Activated naive CD4-positive, alpha-beta T cell treated with anti-CD3 and anti-CD28 coated beads for 36 hours (primary cell): ENCODE measurements at regions of chr9 and their contacts with region 1.

Region 1: DNA sequence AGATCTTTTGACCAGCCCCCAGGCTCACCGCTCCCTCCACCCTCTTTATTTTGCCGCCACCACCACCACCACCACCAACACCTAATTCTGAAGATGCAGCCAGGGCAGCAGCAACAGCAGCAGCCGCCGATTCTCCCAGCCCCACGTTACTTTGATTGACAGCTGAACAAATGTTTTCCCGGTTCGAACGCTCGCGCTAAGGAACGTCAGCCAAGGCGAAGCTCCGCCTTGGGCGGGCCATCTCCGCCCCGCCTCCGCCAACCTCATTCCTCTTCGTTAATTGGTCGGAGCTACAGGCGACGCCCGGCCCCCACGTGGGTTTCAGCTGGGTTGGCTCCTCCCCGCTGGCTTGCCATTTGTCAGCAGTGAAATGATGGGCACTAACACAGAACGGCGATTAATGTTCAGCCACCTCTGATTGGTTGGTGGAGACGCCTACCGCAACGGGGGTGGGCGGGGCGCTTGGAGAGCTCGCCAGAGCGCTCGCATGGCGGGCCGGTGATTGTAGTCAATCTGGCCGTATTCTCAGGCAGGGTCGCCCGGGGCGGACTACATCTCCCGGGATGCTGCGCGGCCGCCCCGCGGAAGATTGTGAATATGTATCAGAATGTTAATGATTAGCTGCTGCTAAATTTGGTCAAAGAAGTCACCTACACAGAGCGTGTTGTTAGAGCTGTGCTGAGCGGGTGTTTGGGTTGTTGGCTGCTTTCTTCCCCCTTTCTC is at the start of gene TLE4:
- DNase-seq: peak; percentile 99
- H3K4me3 Mint-ChIP-seq: peak within 1 kb of the TSS; percentile 80
- H3K27ac Mint-ChIP-seq: peak within 1 kb of the TSS; percentile 46
- H3K4me1 Mint-ChIP-seq: peaks cover 26% of the 10 kb centered on the region
- H3K27me3 Mint-ChIP-seq: peaks cover 6% of the 10 kb centered on the region
- total RNA-seq, gene TLE4: 11.2 to 13.1 TPM

Region 2: DNA sequence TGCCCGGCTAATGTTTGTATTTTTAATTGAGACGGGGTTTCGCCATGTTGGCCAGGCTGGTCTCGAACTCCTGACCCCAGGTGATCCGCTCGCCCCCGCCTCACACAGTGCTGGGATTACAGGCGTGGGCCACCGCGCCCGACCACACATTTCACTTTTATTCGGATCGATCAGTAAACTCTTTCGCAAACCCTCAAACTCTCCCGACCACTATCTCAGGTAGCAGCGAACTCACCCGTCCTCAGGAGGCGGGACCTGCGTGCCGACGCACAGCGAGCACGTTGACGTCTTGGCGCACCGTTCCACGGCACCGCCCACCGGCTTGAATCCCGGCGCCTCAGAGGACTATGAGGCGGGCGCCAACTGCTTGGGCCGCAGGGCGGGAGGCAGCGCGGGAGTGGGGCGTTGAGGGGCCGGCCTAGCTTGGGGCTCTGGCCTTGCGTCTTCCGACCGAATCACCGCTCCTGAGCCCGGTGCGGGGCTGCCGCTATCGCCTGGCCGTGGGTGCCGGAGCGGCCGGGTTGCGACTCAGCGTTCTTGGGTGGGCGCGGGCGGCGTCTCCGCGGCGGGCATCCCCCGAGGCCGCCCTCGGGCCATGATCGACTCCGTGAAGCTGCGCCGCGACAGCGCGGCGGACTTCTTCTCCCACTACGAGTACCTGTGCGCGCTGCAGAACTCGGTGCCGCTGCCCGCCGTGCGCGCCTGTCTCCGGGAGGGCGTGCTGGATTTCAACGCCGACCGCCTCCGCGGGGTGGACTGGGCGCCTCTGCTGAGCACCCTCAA is 1335.5 kb before region 1 on chr9 and contains the start of gene CEP78:
- CTCF ChIA-PET with region 1: no interaction called
- intact Hi-C with region 1: loop called (anchors 10 kb)
- DNase-seq: peak; percentile 91
- H3K4me3 Mint-ChIP-seq: peak within 1 kb of the TSS; percentile 96
- H3K27ac Mint-ChIP-seq: peak within 1 kb of the TSS; percentile 91
- H3K4me1 Mint-ChIP-seq: peaks cover 34% of the 10 kb centered on the region
- H3K27me3 Mint-ChIP-seq: no peaks in the 10 kb centered on the region
- total RNA-seq, gene CEP78: 39.5 to 39.7 TPM

Region 3: DNA sequence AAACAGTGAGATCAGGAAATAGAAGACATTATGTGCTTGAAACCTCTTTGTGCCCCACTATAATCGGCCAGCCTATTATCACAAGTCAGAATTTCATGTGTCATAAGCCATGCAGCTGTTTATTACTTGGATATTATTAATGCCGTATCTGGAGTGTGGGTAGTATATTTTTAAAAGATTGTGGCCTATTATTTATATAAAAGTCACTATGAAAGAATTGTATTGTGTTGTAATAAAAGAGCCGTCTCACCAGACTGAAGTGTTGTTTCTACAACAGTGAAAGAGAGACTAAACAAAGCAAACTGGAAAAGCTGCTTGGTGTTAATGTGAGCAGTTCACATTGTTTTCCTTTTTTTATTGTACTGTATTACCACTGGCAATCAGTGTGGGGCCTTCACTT is 825.5 kb before region 1 on chr9:
- CTCF ChIA-PET with region 1: no interaction called
- intact Hi-C with region 1: no loop called
- DNase-seq: no peak
- H3K4me3 Mint-ChIP-seq: no peak overlapping the region
- H3K27ac Mint-ChIP-seq: no peak overlapping the region
- H3K4me1 Mint-ChIP-seq: no peaks in the 10 kb centered on the region
- H3K27me3 Mint-ChIP-seq: no peaks in the 10 kb centered on the region

Region 4: GRCh38 chr9:79471580-79472543 is 99.6 kb before region 1 on chr9:
- CTCF ChIA-PET with region 1: interaction called, 5 read pairs
- intact Hi-C with region 1: loop called (anchors 2 kb)
- DNase-seq: peak; percentile 42
- H3K4me3 Mint-ChIP-seq: no peak overlapping the region
- H3K27ac Mint-ChIP-seq: no peak overlapping the region
- H3K4me1 Mint-ChIP-seq: peaks cover 20% of the 10 kb centered on the region
- H3K27me3 Mint-ChIP-seq: no peaks in the 10 kb centered on the region

Region 5: DNA sequence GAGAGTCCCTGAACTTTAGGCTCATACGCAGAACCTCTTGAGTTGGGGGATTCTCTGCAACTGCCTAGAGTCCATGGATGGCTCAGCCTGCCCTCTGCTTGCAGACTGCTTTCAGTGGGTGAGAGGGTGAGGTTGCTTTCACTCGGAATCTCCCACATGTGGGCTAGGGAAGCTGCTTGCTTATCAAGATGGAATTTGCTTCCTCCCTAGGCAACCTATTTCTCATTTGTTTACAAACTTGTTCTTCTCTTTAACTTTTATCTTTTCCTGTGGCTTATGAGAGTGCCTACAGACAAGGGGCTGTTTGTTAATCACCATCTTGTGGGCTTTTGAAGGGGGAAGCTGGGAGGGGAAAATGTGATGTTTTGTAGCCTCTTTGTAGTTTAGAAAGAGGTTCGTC is 10.3 kb after region 1 on chr9:
- CTCF ChIA-PET with region 1: interaction called, 6 read pairs
- intact Hi-C with region 1: loop called (anchors 1 kb)
- DNase-seq: peak; percentile 52
- H3K4me3 Mint-ChIP-seq: peak overlapping the region; percentile 62
- H3K27ac Mint-ChIP-seq: peak overlapping the region; percentile 11
- H3K4me1 Mint-ChIP-seq: peaks cover 72% of the 10 kb centered on the region
- H3K27me3 Mint-ChIP-seq: no peaks in the 10 kb centered on the region

Region 6: GRCh38 chr9:79686381-79687130 is 115.1 kb after region 1 on chr9:
- CTCF ChIA-PET with region 1: no interaction called
- intact Hi-C with region 1: loop called (anchors 5 kb)
- DNase-seq: no peak
- H3K4me3 Mint-ChIP-seq: peak overlapping the region; percentile 2
- H3K27ac Mint-ChIP-seq: no peak overlapping the region
- H3K4me1 Mint-ChIP-seq: peaks cover 30% of the 10 kb centered on the region
- H3K27me3 Mint-ChIP-seq: no peaks in the 10 kb centered on the region

Region 7: GRCh38 chr9:79946712-79947111 is 375.2 kb after region 1 on chr9:
- CTCF ChIA-PET with region 1: no interaction called
- intact Hi-C with region 1: loop called (anchors 5 kb)
- DNase-seq: no peak
- H3K4me3 Mint-ChIP-seq: no peak overlapping the region
- H3K27ac Mint-ChIP-seq: no peak overlapping the region
- H3K4me1 Mint-ChIP-seq: no peaks in the 10 kb centered on the region
- H3K27me3 Mint-ChIP-seq: no peaks in the 10 kb centered on the region